AG04449 (cell line): ENCODE measurements at regions of chr19 and their contacts with region 1.

Region 1: GRCh38 chr19:2273356-2274184 is 8.4 kb downstream of the PEAK3 start:
- DNase-seq: no peak
- H3K4me3 ChIP-seq: peak overlapping the region; percentile 48
- CTCF ChIP-seq: peak; percentile 85

Region 2: GRCh38 chr19:2151339-2152229 is 122.0 kb before region 1 on chr19 and contains the start of gene AP3D1:
- CTCF ChIA-PET with region 1: interaction called, 12 read pairs
- POLR2A ChIA-PET with region 1: interaction called, 3 read pairs
- DNase-seq: peak; percentile 96
- H3K4me3 ChIP-seq: peak within 1 kb of the TSS; percentile 92
- CTCF ChIP-seq: no peak

Region 3: DNA sequence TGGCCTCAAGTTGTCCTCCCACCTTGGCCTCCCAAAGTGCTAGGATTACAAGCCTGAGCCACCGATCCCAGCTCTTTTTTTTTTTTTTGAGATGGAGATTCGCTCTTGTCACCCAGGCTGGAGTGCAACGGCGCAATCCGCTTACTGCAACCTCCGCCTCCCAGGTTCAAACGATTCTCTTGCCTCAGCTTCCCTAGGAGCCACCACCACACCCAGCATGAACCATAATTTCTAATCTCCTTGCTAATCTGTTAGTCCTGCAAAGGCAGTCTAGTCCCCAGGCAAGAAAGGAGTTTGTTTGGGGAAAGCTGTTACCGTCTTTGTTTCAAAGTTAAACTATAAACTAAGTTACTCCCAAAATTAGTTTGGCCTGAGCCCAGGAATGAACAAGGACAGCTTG is 115.0 kb before region 1 on chr19:
- CTCF ChIA-PET with region 1: interaction called, 14 read pairs
- POLR2A ChIA-PET with region 1: interaction called, 4 read pairs
- DNase-seq: no peak
- H3K4me3 ChIP-seq: no peak overlapping the region
- CTCF ChIP-seq: no peak

Region 4: GRCh38 chr19:2191456-2192310 is 81.9 kb before region 1 on chr19:
- CTCF ChIA-PET with region 1: no interaction called
- POLR2A ChIA-PET with region 1: no interaction called
- DNase-seq: no peak
- H3K4me3 ChIP-seq: no peak overlapping the region
- CTCF ChIP-seq: no peak

Region 5: GRCh38 chr19:2261438-2262172 is 12.0 kb before region 1 on chr19:
- CTCF ChIA-PET with region 1: interaction called, 10 read pairs
- POLR2A ChIA-PET with region 1: interaction called, 3 read pairs
- DNase-seq: no peak
- H3K4me3 ChIP-seq: no peak overlapping the region
- CTCF ChIP-seq: peak; percentile 38

Region 6: GRCh38 chr19:2289714-2290435 is 16.3 kb after region 1 on chr19:
- CTCF ChIA-PET with region 1: interaction called, 14 read pairs
- POLR2A ChIA-PET with region 1: interaction called, 9 read pairs
- DNase-seq: no peak
- H3K4me3 ChIP-seq: no peak overlapping the region; the same call in 1 of the 2 replicates
- CTCF ChIP-seq: no peak

Region 7: DNA sequence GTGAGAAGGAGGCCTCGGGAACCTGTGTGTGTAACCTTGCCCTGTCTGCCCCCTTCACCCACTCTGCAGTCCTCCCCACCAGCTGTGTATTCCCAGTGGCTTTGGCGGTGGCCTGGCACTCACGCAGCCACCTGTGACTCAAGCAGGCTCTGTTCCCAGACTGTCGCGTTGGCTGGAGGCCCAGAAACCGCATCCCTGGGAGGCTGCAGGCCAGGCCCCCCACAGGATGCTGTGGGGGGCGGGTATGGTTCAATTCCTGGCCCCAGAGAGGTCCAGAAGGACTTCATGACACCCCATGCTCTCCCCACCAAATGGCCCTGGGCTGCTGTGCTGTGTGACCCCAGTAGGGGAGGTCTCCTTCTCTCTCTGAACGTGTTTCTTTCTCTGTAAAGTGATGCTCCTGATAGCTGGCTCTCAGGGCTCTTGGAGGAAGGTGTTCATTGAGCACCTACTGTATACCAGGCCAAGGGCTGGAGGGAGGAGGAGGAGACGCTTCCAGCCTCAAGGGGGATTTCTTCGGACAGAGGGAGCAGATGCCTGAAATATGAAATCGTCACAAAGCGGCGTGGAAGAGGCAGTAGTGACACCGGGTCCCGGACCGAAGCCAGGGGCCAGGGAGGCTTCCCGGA is 36.3 kb after region 1 on chr19:
- CTCF ChIA-PET with region 1: interaction called, 11 read pairs
- POLR2A ChIA-PET with region 1: no interaction called
- DNase-seq: no peak
- H3K4me3 ChIP-seq: no peak overlapping the region
- CTCF ChIP-seq: no peak

Region 8: GRCh38 chr19:2391118-2391725 is 117.7 kb after region 1 on chr19:
- CTCF ChIA-PET with region 1: interaction called, 11 read pairs
- POLR2A ChIA-PET with region 1: no interaction called
- DNase-seq: peak; percentile 19
- H3K4me3 ChIP-seq: no peak overlapping the region
- CTCF ChIP-seq: peak; percentile 69